Naive thymus-derived CD4-positive, alpha-beta T cell (primary cell): ENCODE measurements at regions of chr2 and their contacts with region 1.

Region 1: DNA sequence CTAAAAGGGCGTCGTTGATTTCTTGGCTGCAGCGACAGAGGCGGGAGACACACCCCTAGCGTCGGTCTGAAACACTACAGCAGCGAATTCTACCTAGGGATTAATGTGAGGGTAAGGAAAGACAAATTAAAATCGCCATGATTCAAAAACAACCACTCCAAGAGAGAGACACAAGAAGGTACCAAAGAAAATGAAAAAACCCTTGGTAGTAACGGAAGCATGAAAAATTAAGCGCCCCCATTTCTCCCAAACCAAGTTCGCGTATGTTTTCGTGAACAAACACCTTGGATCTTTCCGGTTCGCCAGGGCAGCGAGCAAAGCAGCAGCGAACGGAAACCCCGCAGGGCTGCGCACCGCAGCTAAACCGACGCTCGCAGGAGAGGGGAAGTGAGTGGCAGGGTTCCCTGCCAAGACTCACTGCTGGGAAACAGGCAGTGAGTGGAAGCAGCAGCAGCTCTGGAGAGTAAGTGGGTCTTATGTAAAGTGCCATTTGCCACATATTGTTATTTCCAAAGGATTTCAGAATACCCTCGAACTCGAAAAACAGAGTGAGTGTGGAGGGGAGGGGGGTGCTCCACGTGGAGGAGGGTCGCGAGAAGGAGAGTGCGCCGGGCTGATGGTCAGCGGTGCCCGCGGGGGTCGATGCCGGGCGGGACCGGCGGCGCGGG is 1.0 kb downstream of the PPP3R1 start:
- DNase-seq: peak; percentile 46 to 91 (median 82)
- ATAC-seq: peak; percentile 75
- H3K4me3 ChIP-seq: peak overlapping the region; percentile 66
- H3K4me3 Mint-ChIP-seq: peak overlapping the region in 6 of 10 donors; percentile 88 to 99 (median 91)
- H3K27ac ChIP-seq: peak overlapping the region; percentile 82
- H3K27ac Mint-ChIP-seq: peak overlapping the region in 7 of 9 donors; percentile 92 to 99 (median 94)
- H3K4me1 ChIP-seq: peaks cover 44 to 55% of the 10 kb centered on the region in 2 donors
- H3K4me1 Mint-ChIP-seq: peaks cover 35 to 44% (median 42%) of the 10 kb centered on the region in 7 donors
- H3K27me3 ChIP-seq: no peaks in the 10 kb centered on the region
- H3K27me3 Mint-ChIP-seq: peaks cover 0 to 2% (median 0%) of the 10 kb centered on the region in 5 donors

Region 2: GRCh38 chr2:68062680-68063387 is 188.5 kb before region 1 on chr2 and contains the start of gene C1D:
- CTCF ChIA-PET with region 1: no interaction called
- POLR2A ChIA-PET with region 1: interaction called, 5 read pairs
- intact Hi-C with region 1: loop called (anchors 1 kb)
- DNase-seq: peak; percentile 87 to 93 (median 91)
- ATAC-seq: peak; percentile 99
- H3K4me3 ChIP-seq: peak within 1 kb of the TSS; percentile 94
- H3K4me3 Mint-ChIP-seq: peak within 1 kb of the TSS; percentile 84 to 98 (median 96)
- H3K27ac ChIP-seq: peak within 1 kb of the TSS; percentile 97
- H3K27ac Mint-ChIP-seq: peak within 1 kb of the TSS; percentile 94 to 99 (median 98)
- H3K4me1 ChIP-seq: peaks cover 11 to 12% of the 10 kb centered on the region in 2 donors
- H3K4me1 Mint-ChIP-seq: peaks cover 16 to 53% (median 44%) of the 10 kb centered on the region in 7 donors
- H3K27me3 ChIP-seq: no peaks in the 10 kb centered on the region
- H3K27me3 Mint-ChIP-seq: peaks cover 0 to 24% (median 5%) of the 10 kb centered on the region in 5 donors
- total RNA-seq, gene C1D: 13.2 to 24.4 (median 15.7) TPM

Region 3: DNA sequence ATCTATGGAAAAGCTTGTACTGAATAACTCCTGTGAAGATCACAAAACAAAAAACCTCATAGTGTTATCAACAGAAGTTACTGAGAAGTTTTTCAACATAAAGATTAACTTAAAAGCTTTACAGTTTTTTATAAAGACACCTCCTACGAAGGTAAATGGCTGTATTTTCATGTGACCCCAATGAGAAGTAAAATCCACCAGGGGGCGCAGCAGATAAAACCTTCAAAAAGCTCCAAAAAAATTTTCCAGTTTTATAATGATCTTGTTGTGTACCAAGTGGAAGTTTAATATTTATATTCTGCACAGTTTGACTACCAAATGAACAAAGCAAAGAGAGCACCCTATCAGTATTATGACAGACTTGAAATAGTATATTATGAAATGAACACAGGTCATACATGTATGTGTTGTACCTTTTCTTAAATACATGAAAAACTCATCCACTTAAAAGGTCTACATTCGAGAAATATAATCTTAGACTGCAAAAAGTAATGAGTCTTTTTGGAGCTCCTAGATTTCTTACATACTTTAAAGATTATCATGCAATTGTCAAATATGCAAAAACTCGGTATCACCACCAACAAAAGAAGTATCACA is 55.1 kb before region 1 on chr2:
- CTCF ChIA-PET with region 1: interaction called, 12 read pairs
- POLR2A ChIA-PET with region 1: interaction called, 12 read pairs
- intact Hi-C with region 1: loop called (anchors 1 to 2 kb)
- DNase-seq: peak in 6 of 9 donors; percentile 21 to 65 (median 57)
- ATAC-seq: peak; percentile 74
- H3K4me3 ChIP-seq: no peak overlapping the region
- H3K4me3 Mint-ChIP-seq: no peak overlapping the region
- H3K27ac ChIP-seq: no peak overlapping the region
- H3K27ac Mint-ChIP-seq: peak overlapping the region in 5 of 9 donors; percentile 6 to 81 (median 72)
- H3K4me1 ChIP-seq: no peaks in the 10 kb centered on the region
- H3K4me1 Mint-ChIP-seq: peaks cover 35 to 92% (median 71%) of the 10 kb centered on the region in 7 donors
- H3K27me3 ChIP-seq: no peaks in the 10 kb centered on the region
- H3K27me3 Mint-ChIP-seq: no peaks in the 10 kb centered on the region

Region 4: DNA sequence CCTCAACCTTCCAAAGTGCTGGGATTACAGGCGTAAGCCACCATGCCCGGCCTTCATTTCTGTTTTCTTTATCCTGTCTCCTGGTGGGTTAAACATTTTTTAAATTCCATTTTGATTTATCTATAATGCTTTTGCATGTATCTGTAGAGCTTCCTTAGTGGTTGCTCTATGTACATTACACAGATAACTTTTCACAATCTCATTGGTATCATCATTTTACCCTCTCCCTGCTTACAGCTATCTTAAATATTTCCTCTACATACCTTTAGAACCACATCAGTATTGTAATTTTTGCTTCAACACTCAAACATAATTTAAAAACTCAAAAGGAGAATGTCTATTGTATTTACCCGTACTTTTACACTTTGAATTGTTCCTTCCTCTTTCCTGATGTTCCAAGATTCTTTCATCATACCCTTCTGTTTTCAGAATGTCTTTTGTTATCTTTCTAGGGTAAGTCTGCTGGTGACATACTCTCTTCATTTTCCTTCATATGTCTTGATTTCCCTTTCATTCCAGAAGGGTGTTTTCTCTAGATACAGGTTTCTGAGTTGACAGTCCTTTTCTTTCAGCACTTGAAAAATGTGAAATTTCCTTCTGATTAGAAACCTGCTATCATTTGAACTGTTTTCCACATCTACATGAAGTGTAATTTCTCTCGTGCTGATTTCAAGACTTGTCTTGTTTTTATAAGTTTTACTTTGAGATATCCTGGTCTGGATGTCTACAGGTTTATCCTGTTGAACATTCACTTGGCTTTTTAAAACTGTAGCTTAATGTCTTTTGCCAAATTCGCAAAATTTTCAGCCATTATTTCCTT is 20.9 kb before region 1 on chr2:
- CTCF ChIA-PET with region 1: interaction called, 4 read pairs
- POLR2A ChIA-PET with region 1: interaction called, 5 read pairs
- intact Hi-C with region 1: loop called (anchors 1 kb)
- DNase-seq: no peak
- ATAC-seq: no peak
- H3K4me3 ChIP-seq: no peak overlapping the region
- H3K4me3 Mint-ChIP-seq: peak overlapping the region in 8 of 10 donors; percentile 2 to 69 (median 26)
- H3K27ac ChIP-seq: no peak overlapping the region
- H3K27ac Mint-ChIP-seq: peak overlapping the region in 7 of 9 donors; percentile 0 to 71 (median 23)
- H3K4me1 ChIP-seq: peaks cover 6 to 37% of the 10 kb centered on the region in 2 donors
- H3K4me1 Mint-ChIP-seq: peaks cover 53 to 96% (median 89%) of the 10 kb centered on the region in 7 donors
- H3K27me3 ChIP-seq: no peaks in the 10 kb centered on the region
- H3K27me3 Mint-ChIP-seq: no peaks in the 10 kb centered on the region

Region 5: GRCh38 chr2:68303033-68303901 is 51.9 kb after region 1 on chr2:
- CTCF ChIA-PET with region 1: no interaction called
- POLR2A ChIA-PET with region 1: no interaction called
- intact Hi-C with region 1: no loop called
- DNase-seq: no peak
- ATAC-seq: no peak
- H3K4me3 ChIP-seq: no peak overlapping the region
- H3K4me3 Mint-ChIP-seq: no peak overlapping the region
- H3K27ac ChIP-seq: no peak overlapping the region
- H3K27ac Mint-ChIP-seq: no peak overlapping the region
- H3K4me1 ChIP-seq: no peaks in the 10 kb centered on the region
- H3K4me1 Mint-ChIP-seq: no peaks in the 10 kb centered on the region
- H3K27me3 ChIP-seq: no peaks in the 10 kb centered on the region
- H3K27me3 Mint-ChIP-seq: peaks cover 0 to 18% (median 5%) of the 10 kb centered on the region in 5 donors

Region 6: DNA sequence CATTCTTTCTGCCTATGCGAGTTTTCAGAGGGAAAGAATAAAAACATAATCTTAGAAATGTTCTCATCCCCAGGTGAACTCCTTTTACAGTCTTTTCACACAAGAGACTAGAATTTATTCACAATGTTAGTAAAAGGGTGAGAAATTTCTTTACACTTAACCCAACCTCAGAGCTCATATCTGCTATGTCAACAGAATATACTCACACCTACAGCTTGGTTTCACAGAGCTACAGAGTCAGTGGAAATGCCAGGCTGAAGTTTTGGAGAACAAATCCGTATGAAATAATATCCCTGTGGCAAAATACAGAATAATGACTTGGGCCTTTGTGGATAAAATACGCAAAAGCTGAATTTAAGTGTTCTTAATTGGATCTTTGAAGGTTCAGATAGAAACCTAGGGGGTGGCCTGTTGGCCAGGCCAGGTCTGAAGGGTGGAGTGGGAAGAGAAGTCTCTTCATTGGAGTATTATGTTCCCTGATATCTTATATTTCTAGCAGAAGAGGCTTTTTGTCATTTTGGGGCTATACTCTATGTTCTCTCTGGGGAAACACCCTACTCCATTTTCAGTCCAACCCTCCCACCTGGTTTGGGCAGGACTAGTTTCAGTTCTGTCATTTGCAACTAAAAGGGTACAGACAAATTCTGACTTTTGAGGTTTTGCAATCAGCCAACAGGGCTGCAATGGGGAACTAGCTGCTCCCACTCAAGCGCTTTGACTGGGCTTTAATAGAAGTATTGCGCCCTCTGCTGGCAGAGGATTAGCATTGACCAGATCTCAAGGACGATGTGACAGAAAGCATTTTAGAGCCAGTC is 190.1 kb after region 1 on chr2:
- CTCF ChIA-PET with region 1: no interaction called
- POLR2A ChIA-PET with region 1: no interaction called
- intact Hi-C with region 1: loop called in 1 of 2 experiments (anchors 1 kb)
- DNase-seq: peak; percentile 52 to 79 (median 72)
- ATAC-seq: peak; percentile 97
- H3K4me3 ChIP-seq: no peak overlapping the region
- H3K4me3 Mint-ChIP-seq: no peak overlapping the region
- H3K27ac ChIP-seq: no peak overlapping the region
- H3K27ac Mint-ChIP-seq: peak overlapping the region in 4 of 9 donors; percentile 11 to 72 (median 40)
- H3K4me1 ChIP-seq: peaks cover 0 to 22% of the 10 kb centered on the region in 2 donors
- H3K4me1 Mint-ChIP-seq: peaks cover 0 to 16% (median 5%) of the 10 kb centered on the region in 7 donors
- H3K27me3 ChIP-seq: no peaks in the 10 kb centered on the region
- H3K27me3 Mint-ChIP-seq: peaks cover 0 to 19% (median 0%) of the 10 kb centered on the region in 5 donors

Region 7: GRCh38 chr2:68909793-68910674 is 658.7 kb after region 1 on chr2:
- CTCF ChIA-PET with region 1: no interaction called
- POLR2A ChIA-PET with region 1: no interaction called
- intact Hi-C with region 1: loop called in 1 of 2 experiments (anchors 2 kb)
- DNase-seq: peak; percentile 29 to 65 (median 59)
- ATAC-seq: peak; percentile 52
- H3K4me3 ChIP-seq: no peak overlapping the region
- H3K4me3 Mint-ChIP-seq: no peak overlapping the region
- H3K27ac ChIP-seq: no peak overlapping the region
- H3K27ac Mint-ChIP-seq: peak overlapping the region in 2 of 9 donors; percentile 33 to 80
- H3K4me1 ChIP-seq: peaks cover 28 to 62% of the 10 kb centered on the region in 2 donors
- H3K4me1 Mint-ChIP-seq: peaks cover 22 to 35% (median 26%) of the 10 kb centered on the region in 7 donors
- H3K27me3 ChIP-seq: no peaks in the 10 kb centered on the region
- H3K27me3 Mint-ChIP-seq: no peaks in the 10 kb centered on the region

Region 8: GRCh38 chr2:69933839-69934613 is 1682.7 kb after region 1 on chr2:
- CTCF ChIA-PET with region 1: no interaction called
- POLR2A ChIA-PET with region 1: no interaction called
- intact Hi-C with region 1: no loop called
- DNase-seq: no peak
- ATAC-seq: peak; percentile 75
- H3K4me3 ChIP-seq: no peak overlapping the region
- H3K4me3 Mint-ChIP-seq: no peak overlapping the region
- H3K27ac ChIP-seq: no peak overlapping the region
- H3K27ac Mint-ChIP-seq: peak overlapping the region in 6 of 9 donors; percentile 3 to 71 (median 59)
- H3K4me1 ChIP-seq: peaks cover 0 to 9% of the 10 kb centered on the region in 2 donors
- H3K4me1 Mint-ChIP-seq: peaks cover 22 to 43% (median 41%) of the 10 kb centered on the region in 7 donors
- H3K27me3 ChIP-seq: no peaks in the 10 kb centered on the region
- H3K27me3 Mint-ChIP-seq: no peaks in the 10 kb centered on the region